Activated T-helper 2 cell treated with anti-CD3 and anti-CD28 coated beads, Interferon-gamma antibody, Interleukin-2, Interleukin-4, amounts not matched to agents 10 μg/mL and 5 μg/mL and 100 μg/mL, durations not matched to agents 14 hours and 24 hours and 36 hours (primary cell): ENCODE measurements at regions of chr15 and their contacts with region 1.

Region 1: DNA sequence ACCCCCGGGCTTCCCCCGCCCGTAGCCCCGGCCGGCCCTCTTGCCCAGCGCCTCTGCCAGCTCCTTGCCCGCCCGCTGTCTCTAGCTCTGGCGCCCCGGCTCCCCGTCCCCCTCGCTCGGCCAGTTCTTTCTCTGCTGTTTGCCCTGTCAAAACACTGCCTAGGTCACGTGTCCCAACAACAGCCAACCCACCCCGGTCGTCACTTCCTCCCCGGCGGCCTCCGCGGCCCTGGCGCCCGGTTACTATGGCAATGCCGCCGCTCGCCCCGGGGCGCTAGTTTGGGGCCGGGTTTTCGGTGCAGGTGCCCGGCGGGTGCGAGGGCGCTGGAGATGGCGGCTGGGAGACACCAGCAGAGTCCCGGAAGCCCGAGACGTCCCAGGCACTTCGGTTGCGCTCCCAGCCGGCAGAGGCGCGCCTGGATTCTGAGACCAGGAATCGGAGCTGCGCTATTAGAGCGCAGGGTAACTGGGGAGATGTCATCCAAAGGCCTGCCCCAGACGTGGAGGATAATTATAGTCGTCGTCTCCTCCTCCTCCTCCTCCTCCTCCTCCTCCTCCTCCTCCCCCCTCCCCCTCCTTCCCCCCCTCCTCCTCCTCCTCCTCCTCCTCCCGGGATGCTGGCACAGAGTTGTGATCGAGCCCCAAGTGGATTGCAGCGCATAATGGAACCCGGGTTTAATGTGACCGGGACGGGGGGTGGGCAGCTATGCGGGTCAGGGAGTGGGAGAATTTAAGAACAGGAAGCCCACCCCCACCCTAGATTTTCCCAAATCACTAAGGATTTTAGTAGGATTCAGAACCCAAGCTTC is at the start of gene ATOSA:
- DNase-seq: peak; percentile 89
- H3K4me3 Mint-ChIP-seq: peak within 1 kb of the TSS; percentile 88
- H3K27ac Mint-ChIP-seq: peak within 1 kb of the TSS; percentile 98
- H3K4me1 Mint-ChIP-seq: peaks cover 38% of the 10 kb centered on the region
- H3K27me3 Mint-ChIP-seq: no peaks in the 10 kb centered on the region
- total RNA-seq, gene ATOSA: 14.4 TPM in 2 replicates

Region 2: DNA sequence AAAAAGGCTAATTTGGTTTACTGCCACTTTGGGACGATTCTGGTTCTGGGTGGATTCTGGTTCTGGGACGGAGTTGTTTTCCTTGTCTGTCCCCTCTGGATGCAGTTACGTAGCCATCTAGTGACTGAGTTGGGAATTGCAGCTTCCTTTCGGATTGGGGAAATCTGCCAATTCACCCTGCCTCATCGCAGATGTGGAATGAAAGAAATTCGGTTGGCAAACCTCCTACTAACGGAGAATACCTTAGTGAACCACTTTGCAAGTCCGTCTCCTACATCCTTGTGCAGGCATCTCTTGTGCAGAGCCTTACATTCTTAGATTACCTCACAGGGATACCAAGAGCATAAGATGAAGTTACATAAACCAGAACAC is 1802.5 kb before region 1 on chr15:
- intact Hi-C with region 1: loop called (anchors 10 kb)
- DNase-seq: peak; percentile 56
- H3K4me3 Mint-ChIP-seq: peak overlapping the region; percentile 54
- H3K27ac Mint-ChIP-seq: peak overlapping the region; percentile 64
- H3K4me1 Mint-ChIP-seq: peaks cover 53% of the 10 kb centered on the region
- H3K27me3 Mint-ChIP-seq: peaks cover 10% of the 10 kb centered on the region

Region 3: DNA sequence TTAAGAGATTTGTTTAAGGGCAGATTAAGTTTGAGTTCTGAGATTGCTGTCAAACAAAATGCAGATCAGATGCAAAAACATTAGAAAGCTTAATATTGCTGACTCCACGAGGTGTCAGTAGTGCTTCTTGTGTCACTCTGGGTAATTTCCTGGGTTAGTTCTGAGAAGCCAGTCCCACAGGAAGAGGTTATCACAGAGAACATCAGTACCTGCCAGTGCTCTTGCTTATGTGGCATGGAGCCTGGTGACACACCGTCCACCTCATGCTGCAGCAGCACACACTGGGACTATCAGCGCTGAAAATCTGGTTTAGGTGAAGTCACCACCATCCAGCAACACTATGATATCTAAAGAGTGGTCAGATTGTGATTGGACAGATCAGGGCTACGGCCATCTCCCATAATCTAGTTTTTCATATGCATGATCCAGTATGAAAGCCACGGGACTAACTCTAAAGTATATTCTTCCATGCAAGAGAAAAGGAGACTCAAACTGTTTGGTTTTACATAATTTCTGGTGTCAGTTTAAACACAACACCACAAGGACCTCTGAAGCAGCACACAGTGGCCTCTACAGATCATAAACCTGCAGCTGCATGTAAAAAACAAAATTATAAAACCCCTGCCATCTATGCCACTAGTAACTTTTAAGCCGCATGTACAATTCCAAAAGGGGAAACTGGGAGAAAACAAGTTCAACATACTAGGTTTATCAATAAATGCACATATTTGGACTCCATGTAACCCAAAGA is 347.8 kb before region 1 on chr15:
- intact Hi-C with region 1: loop called (anchors 5 kb)
- DNase-seq: peak; percentile 54
- H3K4me3 Mint-ChIP-seq: peak overlapping the region; percentile 19
- H3K27ac Mint-ChIP-seq: peak overlapping the region; percentile 66
- H3K4me1 Mint-ChIP-seq: peaks cover 24% of the 10 kb centered on the region
- H3K27me3 Mint-ChIP-seq: no peaks in the 10 kb centered on the region

Region 4: DNA sequence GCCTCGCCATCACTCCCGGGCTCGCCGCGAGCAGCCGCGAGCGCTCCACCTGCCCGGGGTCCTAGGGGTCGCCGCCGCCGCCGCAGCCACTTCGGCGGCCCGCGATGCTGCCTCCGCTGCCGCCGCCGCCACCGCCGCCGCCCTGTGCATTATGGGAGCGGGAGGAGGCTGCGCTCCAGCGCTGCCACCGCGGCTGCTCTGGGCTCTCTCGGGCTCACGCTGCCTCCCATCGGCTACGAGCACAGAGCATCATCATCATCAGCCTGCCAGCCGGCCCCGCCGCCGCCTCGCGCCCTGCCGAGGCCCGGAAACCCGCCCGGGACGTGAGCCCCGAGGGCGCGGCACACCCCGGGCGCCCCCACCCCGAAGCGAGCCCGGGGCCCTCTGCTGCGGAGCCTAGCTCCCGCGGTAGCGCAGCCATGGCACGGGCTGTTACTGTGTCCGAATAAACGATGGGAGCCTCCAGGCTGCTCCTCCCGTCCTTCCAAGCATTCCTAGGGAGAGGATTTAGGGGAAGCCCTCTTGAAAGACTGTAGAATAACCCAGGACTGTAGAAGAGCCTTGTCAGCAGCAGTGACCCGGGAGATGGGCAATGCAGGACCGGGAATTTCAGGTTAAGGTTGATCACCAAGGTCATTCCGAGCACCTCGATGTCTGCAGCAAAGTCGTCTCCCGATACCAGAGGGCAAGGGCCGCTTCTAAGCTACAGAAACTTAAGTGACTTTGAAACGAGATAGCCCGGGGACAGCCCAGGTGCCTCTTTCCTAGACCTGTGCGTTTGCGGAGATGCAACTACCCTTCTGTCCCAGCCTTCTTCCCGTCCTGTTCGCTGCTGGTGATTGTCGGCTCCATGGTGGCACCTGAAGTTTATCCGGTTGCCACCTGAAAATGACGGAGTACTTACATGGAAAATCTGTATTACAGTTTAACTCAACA is 150.2 kb before region 1 on chr15:
- intact Hi-C with region 1: loop called (anchors 1 kb)
- DNase-seq: peak; percentile 78
- H3K4me3 Mint-ChIP-seq: peak overlapping the region; percentile 79
- H3K27ac Mint-ChIP-seq: peak overlapping the region; percentile 24
- H3K4me1 Mint-ChIP-seq: peaks cover 29% of the 10 kb centered on the region
- H3K27me3 Mint-ChIP-seq: peaks cover 18% of the 10 kb centered on the region

Region 5: GRCh38 chr15:52658955-52659354 is 20.5 kb before region 1 on chr15:
- intact Hi-C with region 1: loop called (anchors 2 kb)
- DNase-seq: no peak
- H3K4me3 Mint-ChIP-seq: no peak overlapping the region
- H3K27ac Mint-ChIP-seq: peak overlapping the region; percentile 7
- H3K4me1 Mint-ChIP-seq: peaks cover 25% of the 10 kb centered on the region
- H3K27me3 Mint-ChIP-seq: no peaks in the 10 kb centered on the region

Region 6: GRCh38 chr15:52765785-52766184 is 86.3 kb after region 1 on chr15:
- intact Hi-C with region 1: no loop called
- DNase-seq: no peak
- H3K4me3 Mint-ChIP-seq: no peak overlapping the region
- H3K27ac Mint-ChIP-seq: no peak overlapping the region
- H3K4me1 Mint-ChIP-seq: no peaks in the 10 kb centered on the region
- H3K27me3 Mint-ChIP-seq: peaks cover 28% of the 10 kb centered on the region